Right ventricle myocardium superior (tissue), 1 donor: ENCODE measurements at regions of chr6 and their contacts with region 1.

Region 1: GRCh38 chr6:53171605-53172446 is 23.2 kb upstream of the GCM1 start:
- DNase-seq: peak; percentile 94
- ATAC-seq: peak; percentile 98

Region 2: GRCh38 chr6:53410508-53411258 is 238.9 kb after region 1 on chr6:
- intact Hi-C with region 1: loop called (anchors 2 kb)
- DNase-seq: peak; percentile 75
- ATAC-seq: peak; percentile 96

Region 3: DNA sequence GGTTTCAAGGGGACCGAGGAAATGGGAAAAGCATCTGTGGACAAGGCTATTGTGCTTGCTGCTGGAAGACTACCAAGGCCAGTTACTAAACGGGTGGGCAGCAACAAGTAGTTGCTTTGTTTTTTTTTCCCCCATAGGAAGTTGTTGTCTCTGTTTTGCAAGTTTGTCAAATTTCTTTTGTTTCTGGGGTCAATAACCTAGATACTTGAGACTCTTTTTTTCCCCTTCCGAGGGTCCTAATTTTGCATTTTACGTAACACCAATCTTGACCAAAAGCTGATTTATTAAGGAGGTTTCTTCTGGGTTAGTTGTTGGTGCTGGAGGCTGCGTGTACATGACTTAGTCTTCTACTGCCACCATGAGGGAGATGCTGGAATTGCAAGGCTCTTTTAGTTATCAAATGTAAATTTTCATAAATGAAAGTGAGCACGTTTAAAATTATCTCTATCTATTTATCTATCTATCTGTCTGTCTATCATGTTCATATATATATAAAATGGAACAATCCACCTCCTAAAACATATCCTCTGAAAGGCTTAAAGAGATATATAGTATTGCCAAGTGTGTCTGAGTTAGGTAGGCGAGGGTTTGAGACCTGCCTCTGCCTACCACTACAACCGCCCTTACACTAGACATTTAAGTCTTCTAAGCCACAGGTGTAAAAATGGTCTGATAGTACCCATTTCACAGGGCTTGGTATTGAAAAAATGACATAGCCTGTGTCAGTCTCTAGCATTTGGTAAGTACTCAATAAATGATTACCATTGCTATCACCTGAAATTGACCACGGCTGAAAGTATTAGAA is 312.9 kb after region 1 on chr6:
- intact Hi-C with region 1: loop called (anchors 2 kb)
- DNase-seq: no peak
- ATAC-seq: peak; percentile 93

Region 4: GRCh38 chr6:53725791-53726431 is 554.1 kb after region 1 on chr6:
- intact Hi-C with region 1: loop called (anchors 10 kb)
- DNase-seq: peak; percentile 82
- ATAC-seq: peak; percentile 95